Body of pancreas (tissue), 4 donors: ENCODE measurements at regions of chr15 and their contacts with region 1.

Region 1: GRCh38 chr15:71448688-71449114 is 333.4 kb downstream of the THSD4 start:
- DNase-seq: peak; percentile 62 to 76 (median 66)
- ATAC-seq: peak; percentile 72
- H3K4me3 ChIP-seq: no peak overlapping the region
- H3K27ac ChIP-seq: no peak overlapping the region
- H3K4me1 ChIP-seq: peaks cover 4% of the 10 kb centered on the region
- H3K27me3 ChIP-seq: no peaks in the 10 kb centered on the region
- CTCF ChIP-seq: peak; percentile 85 to 95 (median 94)
- POLR2A ChIP-seq: no peak

Region 2: GRCh38 chr15:70902107-70902506 is 546.6 kb before region 1 on chr15:
- intact Hi-C with region 1: no loop called
- DNase-seq: no peak
- ATAC-seq: no peak
- H3K4me3 ChIP-seq: no peak overlapping the region
- H3K27ac ChIP-seq: no peak overlapping the region
- H3K4me1 ChIP-seq: no peaks in the 10 kb centered on the region
- H3K27me3 ChIP-seq: no peaks in the 10 kb centered on the region
- CTCF ChIP-seq: no peak
- POLR2A ChIP-seq: no peak

Region 3: GRCh38 chr15:71228403-71228802 is 220.3 kb before region 1 on chr15:
- intact Hi-C with region 1: no loop called
- DNase-seq: no peak
- ATAC-seq: no peak
- H3K4me3 ChIP-seq: no peak overlapping the region
- H3K27ac ChIP-seq: no peak overlapping the region
- H3K4me1 ChIP-seq: no peaks in the 10 kb centered on the region
- H3K27me3 ChIP-seq: no peaks in the 10 kb centered on the region
- CTCF ChIP-seq: no peak
- POLR2A ChIP-seq: no peak

Region 4: GRCh38 chr15:71386448-71387236 is 62.1 kb before region 1 on chr15:
- intact Hi-C with region 1: loop called (anchors 10 kb)
- DNase-seq: peak in 1 of 4 donors; percentile 9
- ATAC-seq: no peak
- H3K4me3 ChIP-seq: no peak overlapping the region
- H3K27ac ChIP-seq: peak overlapping the region in 1 of 4 donors; percentile 22
- H3K4me1 ChIP-seq: peaks cover 28% of the 10 kb centered on the region
- H3K27me3 ChIP-seq: no peaks in the 10 kb centered on the region
- CTCF ChIP-seq: peak in 6 of 7 experiments; percentile 35 to 69 (median 56)
- POLR2A ChIP-seq: no peak

Region 5: GRCh38 chr15:71596672-71597071 is 148.0 kb after region 1 on chr15:
- intact Hi-C with region 1: no loop called
- DNase-seq: peak; percentile 13 to 33 (median 24)
- ATAC-seq: no peak
- H3K4me3 ChIP-seq: no peak overlapping the region
- H3K27ac ChIP-seq: peak overlapping the region in 1 of 4 donors; percentile 21
- H3K4me1 ChIP-seq: peaks cover 8% of the 10 kb centered on the region
- H3K27me3 ChIP-seq: no peaks in the 10 kb centered on the region
- CTCF ChIP-seq: no peak
- POLR2A ChIP-seq: no peak

Region 6: GRCh38 chr15:71730277-71731144 is 281.8 kb after region 1 on chr15:
- intact Hi-C with region 1: loop called (anchors 5 kb)
- DNase-seq: peak; percentile 38 to 64 (median 48)
- ATAC-seq: peak; percentile 80
- H3K4me3 ChIP-seq: no peak overlapping the region
- H3K27ac ChIP-seq: no peak overlapping the region
- H3K4me1 ChIP-seq: no peaks in the 10 kb centered on the region
- H3K27me3 ChIP-seq: no peaks in the 10 kb centered on the region
- CTCF ChIP-seq: peak; percentile 70 to 80 (median 73)
- POLR2A ChIP-seq: no peak